PC-3 (cell line): ENCODE measurements at regions of chr13 and their contacts with region 1.

Region 1: GRCh38 chr13:77565635-77566034 is 30.1 kb downstream of the SCEL start:
- DNase-seq: peak; percentile 66
- ATAC-seq: peak; percentile 67
- H3K4me3 ChIP-seq: no peak overlapping the region
- H3K27ac ChIP-seq: no peak overlapping the region
- H3K4me1 ChIP-seq: 0 out of 2 replicates have a peak, but pooled peaks cover 3% of the 10 kb centered on the region
- H3K27me3 ChIP-seq: no peaks in the 10 kb centered on the region
- CTCF ChIP-seq: peak; percentile 73

Region 2: DNA sequence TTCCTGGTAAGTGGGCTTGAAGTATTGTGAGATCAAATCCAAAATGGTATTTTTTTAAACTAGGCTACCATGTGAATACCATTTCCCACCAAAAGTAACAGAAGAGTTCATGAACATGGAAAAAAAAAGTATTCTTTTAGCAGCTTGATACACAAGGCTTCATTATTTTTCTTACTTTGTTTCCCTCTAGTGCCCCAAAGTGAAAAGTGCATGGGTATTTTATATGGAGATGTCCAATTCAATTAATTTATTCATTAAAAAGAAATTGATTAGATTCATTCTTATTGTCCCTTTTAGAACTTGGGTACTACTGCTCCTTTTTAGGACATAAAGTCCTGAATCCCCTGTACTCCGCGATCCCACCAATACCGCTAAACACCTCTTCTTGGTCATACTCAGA is 58.8 kb before region 1 on chr13:
- CTCF ChIA-PET with region 1: interaction called, 3 read pairs
- POLR2A ChIA-PET with region 1: no interaction called
- intact Hi-C with region 1: loop called (anchors 1 kb)
- DNase-seq: peak; percentile 30
- ATAC-seq: no peak
- H3K4me3 ChIP-seq: no peak overlapping the region
- H3K27ac ChIP-seq: peak overlapping the region; percentile 50; the same call in 1 of the 2 replicates
- H3K4me1 ChIP-seq: peaks cover 32% of the 10 kb centered on the region
- H3K27me3 ChIP-seq: no peaks in the 10 kb centered on the region
- CTCF ChIP-seq: peak; percentile 52; the same call in 1 of the 2 replicates